Activated B cell treated with CpG ODN at 0.5 μM for 24 hours (primary cell): ENCODE measurements at regions of chr22 and their contacts with region 1.

Region 1: GRCh38 chr22:22903355-22903777 is 15.8 kb downstream of the IGLL5 start:
- DNase-seq: no peak
- ATAC-seq: no peak
- H3K4me3 Mint-ChIP-seq: peak overlapping the region; percentile 87
- H3K27ac Mint-ChIP-seq: peak overlapping the region; percentile 76
- H3K4me1 Mint-ChIP-seq: peaks cover 66% of the 10 kb centered on the region
- H3K27me3 Mint-ChIP-seq: no peaks in the 10 kb centered on the region
- CTCF ChIP-seq: no peak

Region 2: DNA sequence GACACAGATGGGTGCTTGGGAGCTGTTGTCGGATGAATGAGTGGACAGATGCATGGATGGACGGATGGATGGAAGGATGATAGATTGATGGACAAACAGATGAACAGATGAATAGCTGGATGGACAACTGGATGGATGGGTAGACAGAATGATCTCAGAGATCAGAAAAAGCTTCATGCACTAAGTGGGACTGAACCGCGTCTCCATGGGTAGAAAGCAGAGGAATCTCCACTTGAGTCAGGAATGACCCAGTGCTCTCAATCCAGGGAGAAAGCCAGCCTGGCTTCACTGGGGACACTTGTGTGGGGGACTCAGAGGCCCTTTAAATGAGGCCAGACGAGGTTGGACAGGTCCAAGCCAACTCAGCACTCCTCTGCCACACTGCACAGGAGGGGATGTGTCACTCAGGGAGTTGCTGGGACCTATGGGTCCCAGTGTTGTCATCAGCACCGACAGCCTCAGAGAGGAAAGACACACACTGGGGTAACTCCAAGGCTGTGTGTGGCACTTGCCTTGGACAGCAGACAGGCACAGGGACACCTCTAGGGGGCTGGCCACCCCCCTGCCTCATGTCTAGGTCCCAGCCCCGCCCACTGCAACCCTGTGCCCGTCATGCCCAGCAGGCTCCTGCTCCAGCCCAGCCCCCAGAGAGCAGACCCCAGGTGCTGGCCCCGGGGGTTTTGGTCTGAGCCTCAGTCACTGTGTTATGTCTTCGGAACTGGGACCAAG is 10.1 kb before region 1 on chr22:
- CTCF ChIA-PET with region 1: no interaction called
- POLR2A ChIA-PET with region 1: interaction called, 8 read pairs
- intact Hi-C with region 1: loop called (anchors 1 kb)
- DNase-seq: peak; percentile 27
- ATAC-seq: peak; percentile 53
- H3K4me3 Mint-ChIP-seq: peak overlapping the region; percentile 75
- H3K27ac Mint-ChIP-seq: peak overlapping the region; percentile 82
- H3K4me1 Mint-ChIP-seq: peaks cover 77% of the 10 kb centered on the region
- H3K27me3 Mint-ChIP-seq: peaks cover 8% of the 10 kb centered on the region
- CTCF ChIP-seq: no peak

Region 3: GRCh38 chr22:22913989-22914388 is 10.6 kb after region 1 on chr22:
- CTCF ChIA-PET with region 1: interaction called, 3 read pairs
- POLR2A ChIA-PET with region 1: interaction called, 16 read pairs
- intact Hi-C with region 1: loop called (anchors 1 kb)
- DNase-seq: no peak
- ATAC-seq: peak; percentile 73
- H3K4me3 Mint-ChIP-seq: peak overlapping the region; percentile 58
- H3K27ac Mint-ChIP-seq: peak overlapping the region; percentile 85
- H3K4me1 Mint-ChIP-seq: peaks cover 88% of the 10 kb centered on the region
- H3K27me3 Mint-ChIP-seq: no peaks in the 10 kb centered on the region
- CTCF ChIP-seq: no peak